Gastrocnemius medialis (tissue), 4 donors: ENCODE measurements at regions of chr14 and their contacts with region 1.

Region 1: DNA sequence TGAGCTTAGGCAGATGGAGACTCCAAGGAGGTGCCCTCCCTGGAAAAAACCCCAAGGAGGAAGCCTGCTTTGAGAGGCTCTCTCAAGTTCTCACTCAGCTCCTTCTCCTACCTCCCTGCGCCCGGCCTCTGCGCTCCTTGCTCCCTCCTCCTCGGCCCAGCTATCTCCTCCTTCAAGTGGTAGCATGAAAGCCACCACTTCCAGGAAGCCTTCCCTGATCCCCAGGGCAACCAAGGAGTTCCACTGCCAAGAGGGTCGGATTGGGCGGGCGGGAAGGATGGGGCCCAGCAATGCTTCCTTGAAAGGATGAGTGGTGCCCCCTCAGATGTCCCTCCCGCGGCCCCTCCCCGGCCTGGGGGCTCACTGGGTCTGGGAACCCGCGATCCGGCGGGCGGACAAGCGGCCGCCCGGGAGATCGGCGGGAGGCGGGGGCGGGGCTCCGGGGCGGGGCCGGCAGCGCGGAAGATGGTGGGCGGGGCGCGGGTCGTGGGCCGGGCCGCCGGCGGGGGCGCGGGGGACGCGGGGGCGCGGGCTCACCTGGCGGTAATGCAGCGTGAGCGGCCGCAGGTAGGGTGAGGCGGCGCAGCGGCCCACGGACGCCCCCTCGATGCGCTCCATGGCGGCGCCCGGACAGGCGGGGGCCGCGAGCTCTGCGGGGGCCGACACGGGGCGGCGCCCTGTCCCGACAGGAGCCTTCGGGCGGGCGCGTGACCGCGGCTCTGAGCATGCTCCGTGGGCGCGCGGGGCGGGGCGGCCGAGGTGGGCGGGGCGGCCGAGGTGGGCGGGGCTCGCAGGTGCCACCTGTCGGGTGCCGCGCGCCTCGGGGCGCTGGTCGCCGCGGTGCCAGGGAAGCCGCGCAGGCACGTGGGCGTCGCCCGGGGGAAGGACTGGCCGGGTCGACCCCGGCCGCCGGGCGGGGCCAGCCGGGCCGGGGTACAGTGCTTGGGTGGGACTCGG is at the start of gene NUDT14:
- DNase-seq: peak in 1 of 2 donors; percentile 69
- ATAC-seq: peak; percentile 75 to 79
- H3K4me3 ChIP-seq: peak within 1 kb of the TSS; percentile 53 to 71 (median 60)
- H3K27ac ChIP-seq: peak within 1 kb of the TSS; percentile 44 to 64 (median 54)
- H3K4me1 ChIP-seq: peaks cover 20 to 35% of the 10 kb centered on the region in 2 donors
- H3K27me3 ChIP-seq: no peaks in the 10 kb centered on the region
- CTCF ChIP-seq: no peak
- POLR2A ChIP-seq: peak; percentile 27 to 50
- total RNA-seq, gene NUDT14: 11.0 to 25.5 (median 16.4) TPM

Region 2: DNA sequence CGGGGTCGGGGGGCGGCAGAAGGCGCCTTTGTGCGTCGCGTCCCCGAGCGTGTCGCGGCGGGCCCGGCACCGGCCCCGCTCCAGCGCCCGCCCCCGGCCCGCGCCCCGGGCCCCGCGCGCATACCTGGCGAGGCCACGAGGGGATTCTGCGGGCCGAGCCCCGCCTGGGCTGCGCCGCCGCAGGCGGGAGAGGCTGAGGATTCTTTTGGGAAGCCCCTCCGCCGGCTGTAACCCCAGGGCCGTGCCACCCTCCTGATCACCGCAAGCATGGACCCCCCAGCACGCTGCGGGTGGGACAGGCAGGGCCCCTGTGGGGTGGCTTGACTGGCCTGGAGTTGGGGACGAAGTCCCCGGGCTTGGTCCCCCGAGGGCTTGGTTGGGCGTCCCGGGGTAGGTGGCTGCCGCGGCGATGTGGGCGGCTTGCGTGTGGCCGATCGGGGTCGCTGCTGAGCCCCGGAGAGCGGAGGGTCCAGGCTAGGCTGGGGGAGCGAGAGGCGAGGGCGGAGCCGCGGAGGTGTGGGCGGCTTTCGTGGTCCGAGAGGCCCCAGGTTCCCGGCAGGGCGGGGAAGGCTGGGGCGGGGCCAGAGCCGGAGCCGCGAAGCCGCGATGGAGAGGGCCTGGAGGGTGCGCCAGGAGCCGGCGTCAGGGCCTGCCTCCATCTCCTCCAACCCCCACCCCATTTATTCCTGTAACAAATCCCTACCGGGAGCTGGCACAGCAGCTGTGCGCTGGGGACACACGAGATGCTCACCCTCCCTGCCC is 87.3 kb before region 1 on chr14:
- in situ Hi-C with region 1: no loop called
- intact Hi-C with region 1: loop called (anchors 5 kb)
- DNase-seq: no peak
- ATAC-seq: no peak
- H3K4me3 ChIP-seq: peak overlapping the region; percentile 49 to 66 (median 58)
- H3K27ac ChIP-seq: peak overlapping the region; percentile 24 to 64 (median 46)
- H3K4me1 ChIP-seq: peaks cover 3 to 33% of the 10 kb centered on the region in 2 donors
- H3K27me3 ChIP-seq: peaks cover 3 to 8% (median 7%) of the 10 kb centered on the region in 3 donors
- CTCF ChIP-seq: no peak
- POLR2A ChIP-seq: no peak